ENCODE measurements at regions of chr17 and their contacts with region 1.

Region 1: GRCh38 chr17:10618202-10618635 is 38.9 kb downstream of the MYH3 start:
- DNase-seq: peak; percentile 70 to 84
- ATAC-seq: peak; percentile 53 to 74 (median 72)
- H3K4me3 ChIP-seq: no peak overlapping the region
- H3K27ac ChIP-seq: peak overlapping the region; percentile 84
- H3K4me1 ChIP-seq: peaks cover 17% of the 10 kb centered on the region
- H3K27me3 ChIP-seq: no peaks in the 10 kb centered on the region
- CTCF ChIP-seq: peak; percentile 82

Region 2: DNA sequence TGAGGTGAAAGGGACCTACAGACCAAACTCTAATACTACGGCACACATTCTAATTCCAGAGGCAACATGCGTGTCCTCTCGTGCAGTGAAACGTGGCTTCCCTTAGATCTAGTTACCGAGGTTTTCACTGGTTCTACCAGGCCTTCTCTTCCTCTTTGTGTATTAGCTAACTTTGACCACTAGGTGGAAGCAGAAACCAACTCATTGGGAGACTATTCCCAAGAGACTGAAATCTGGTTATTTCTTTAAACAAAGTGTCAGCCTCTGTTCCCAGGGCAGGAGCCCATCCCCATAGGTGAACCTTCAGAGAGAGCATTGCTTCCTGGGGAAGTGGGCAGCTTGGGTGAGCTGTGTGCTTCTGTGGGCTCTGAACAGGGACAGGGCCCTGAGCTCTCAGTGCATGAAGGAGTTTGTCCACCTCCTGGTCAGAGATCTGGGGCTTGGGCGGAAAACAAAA is 693.5 kb before region 1 on chr17:
- intact Hi-C with region 1: loop called (anchors 5 to 10 kb)
- DNase-seq: no peak
- ATAC-seq: peak; percentile 69 to 80 (median 72)
- H3K4me3 ChIP-seq: no peak overlapping the region
- H3K27ac ChIP-seq: no peak overlapping the region
- H3K4me1 ChIP-seq: no peaks in the 10 kb centered on the region
- H3K27me3 ChIP-seq: no peaks in the 10 kb centered on the region
- CTCF ChIP-seq: peak; percentile 87

Region 3: DNA sequence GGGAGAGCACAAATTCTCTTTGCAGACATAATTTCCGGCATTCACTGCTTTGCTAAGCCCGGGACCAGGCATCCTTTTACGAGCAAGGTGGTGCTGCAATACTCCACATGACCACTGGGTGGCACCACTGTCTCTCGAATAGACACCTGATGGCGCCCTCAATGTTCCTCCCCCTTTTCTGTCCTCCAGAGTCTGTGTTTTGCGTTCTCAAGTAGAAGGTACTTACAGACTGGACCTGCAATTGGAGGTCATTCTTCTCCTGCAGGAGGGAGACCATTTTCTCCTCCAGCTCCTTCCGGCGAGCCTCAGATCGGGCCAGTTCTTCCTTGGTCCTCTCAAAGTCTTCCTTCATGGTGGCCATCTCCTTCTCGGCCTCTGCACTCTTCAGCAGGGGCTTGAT is 290.6 kb before region 1 on chr17:
- intact Hi-C with region 1: loop called (anchors 2 to 5 kb)
- DNase-seq: peak; percentile 75 to 88
- ATAC-seq: peak; percentile 71 to 87 (median 84)
- H3K4me3 ChIP-seq: no peak overlapping the region
- H3K27ac ChIP-seq: no peak overlapping the region
- H3K4me1 ChIP-seq: no peaks in the 10 kb centered on the region
- H3K27me3 ChIP-seq: no peaks in the 10 kb centered on the region
- CTCF ChIP-seq: peak; percentile 92

Region 4: GRCh38 chr17:10384175-10384574 is 234.0 kb before region 1 on chr17:
- intact Hi-C with region 1: loop called in 1 of 2 experiments (anchors 5 kb)
- DNase-seq: peak in 1 of 2 donors; percentile 57
- ATAC-seq: peak; percentile 86 to 98 (median 97)
- H3K4me3 ChIP-seq: peak overlapping the region; percentile 26
- H3K27ac ChIP-seq: peak overlapping the region; percentile 77
- H3K4me1 ChIP-seq: peaks cover 11% of the 10 kb centered on the region
- H3K27me3 ChIP-seq: no peaks in the 10 kb centered on the region
- CTCF ChIP-seq: no peak

Region 5: GRCh38 chr17:10499950-10500349 is 118.3 kb before region 1 on chr17:
- intact Hi-C with region 1: loop called in 1 of 2 experiments (anchors 5 kb)
- DNase-seq: no peak
- ATAC-seq: peak in 3 of 4 donors; percentile 12 to 53 (median 45)
- H3K4me3 ChIP-seq: no peak overlapping the region
- H3K27ac ChIP-seq: no peak overlapping the region
- H3K4me1 ChIP-seq: no peaks in the 10 kb centered on the region
- H3K27me3 ChIP-seq: no peaks in the 10 kb centered on the region
- CTCF ChIP-seq: no peak

Region 6: GRCh38 chr17:10513299-10514067 is 104.7 kb before region 1 on chr17:
- intact Hi-C with region 1: loop called (anchors 5 kb)
- DNase-seq: no peak
- ATAC-seq: peak; percentile 52 to 69 (median 62)
- H3K4me3 ChIP-seq: peak overlapping the region; percentile 56
- H3K27ac ChIP-seq: peak overlapping the region; percentile 80
- H3K4me1 ChIP-seq: peaks cover 4% of the 10 kb centered on the region
- H3K27me3 ChIP-seq: no peaks in the 10 kb centered on the region
- CTCF ChIP-seq: no peak

Region 7: GRCh38 chr17:10549096-10549842 is 69.0 kb before region 1 on chr17 and contains the start of gene MYH2:
- intact Hi-C with region 1: loop called in 1 of 2 experiments (anchors 10 kb)
- DNase-seq: no peak
- ATAC-seq: peak; percentile 67 to 80 (median 76)
- H3K4me3 ChIP-seq: peak within 1 kb of the TSS; percentile 58
- H3K27ac ChIP-seq: peak within 1 kb of the TSS; percentile 88
- H3K4me1 ChIP-seq: peaks cover 15% of the 10 kb centered on the region
- H3K27me3 ChIP-seq: no peaks in the 10 kb centered on the region
- CTCF ChIP-seq: no peak
- total RNA-seq, gene MYH2: 1,903 to 20,190 (median 5,841) TPM